ENCODE measurements at regions of chr6 and their contacts with region 1.

Region 1: DNA sequence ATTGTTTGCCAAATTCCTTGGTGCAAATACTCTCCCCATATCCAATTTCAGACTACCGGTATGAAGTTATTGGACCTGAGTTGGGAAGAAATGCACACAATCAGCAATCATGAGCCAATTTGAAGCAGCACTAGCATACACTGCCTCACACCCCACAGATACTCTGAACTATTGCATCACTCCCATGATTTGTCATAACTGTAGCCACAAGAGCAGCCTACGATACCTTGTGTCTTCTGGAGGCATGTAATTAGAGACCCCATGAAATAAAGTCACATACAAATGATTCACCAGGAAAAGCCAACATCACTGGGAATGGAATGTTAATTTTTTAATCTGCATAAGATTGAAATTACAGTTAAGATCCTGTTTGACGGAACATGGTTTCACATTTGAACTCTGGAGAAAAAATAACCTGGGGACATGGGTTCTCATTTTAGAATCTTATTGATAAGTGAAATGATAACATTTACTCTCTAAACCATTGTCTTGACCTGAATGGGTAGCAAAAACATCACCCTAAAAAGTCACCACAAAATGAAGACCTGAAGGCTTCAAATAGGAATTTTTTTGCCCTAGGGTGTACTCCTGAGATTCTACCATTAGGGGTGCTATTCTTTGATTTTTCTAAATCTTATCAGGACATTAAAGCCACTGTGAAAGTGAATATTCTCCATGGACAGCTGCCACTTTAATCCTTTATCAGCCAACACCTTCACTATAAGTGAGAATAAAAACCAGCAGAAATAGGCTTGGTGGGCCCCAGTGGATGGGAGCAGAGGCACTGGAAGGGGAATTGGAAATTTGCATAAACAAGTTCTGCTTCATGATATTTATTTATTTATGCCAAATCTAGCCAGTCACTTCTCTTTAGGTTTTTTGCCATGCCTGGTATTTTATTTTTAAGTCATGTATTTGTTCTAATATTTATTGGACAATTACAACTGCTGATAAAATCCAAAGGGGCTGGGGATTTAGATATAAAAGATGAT is 34.5 kb upstream of the HBS1L start:
- DNase-seq: peak; percentile 52 to 60 (median 58)
- ATAC-seq: peak; percentile 63
- H3K4me3 ChIP-seq: no peak overlapping the region
- H3K27ac ChIP-seq: peak overlapping the region; percentile 19; the same call in 1 of the 3 replicates
- H3K4me1 ChIP-seq: peaks cover 29 to 86% of the 10 kb centered on the region in 2 experiments
- H3K27me3 ChIP-seq: no peaks in the 10 kb centered on the region
- CTCF ChIP-seq: peak in 2 of 3 experiments; percentile 55 to 60; a peak in 5 of 6 replicates
- EP300 ChIP-seq: 0 out of 2 replicates have a peak, but pooled peaks have one; percentile 13
- POLR2A ChIP-seq: no peak
- RAD21 ChIP-seq: no peak; a peak in 1 of 4 replicates

Region 2: DNA sequence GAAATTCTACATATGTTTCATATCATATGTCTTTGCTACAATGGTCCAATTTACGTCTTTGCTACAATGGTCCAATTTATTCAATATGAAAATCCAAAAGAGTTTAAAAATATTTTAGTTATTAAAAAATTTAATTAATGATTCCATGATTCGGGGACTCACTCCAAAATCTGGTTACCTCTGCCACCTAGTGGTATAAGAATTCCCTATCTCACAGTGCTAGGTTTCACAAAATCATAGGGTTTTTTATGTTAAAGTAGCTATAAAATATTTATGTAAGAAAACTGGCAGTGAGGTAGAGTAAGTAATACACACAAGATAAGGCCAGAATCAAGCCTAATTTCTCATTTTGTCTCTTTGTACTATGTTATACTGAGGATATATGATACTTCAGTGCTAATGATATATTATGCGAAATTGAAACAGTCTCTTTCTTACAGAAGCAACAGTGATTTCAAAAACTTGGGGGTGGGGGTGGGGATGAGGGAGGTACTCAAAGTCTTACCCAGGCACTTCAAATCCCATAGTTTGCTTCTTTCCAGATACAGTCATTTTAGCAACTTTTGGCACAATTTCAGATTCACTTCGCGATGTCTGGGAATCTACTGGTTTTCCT is 86.8 kb before region 1 on chr6:
- CTCF ChIA-PET with region 1: no interaction called
- POLR2A ChIA-PET with region 1: no interaction called
- in situ Hi-C with region 1: no loop called
- intact Hi-C with region 1: loop called (anchors 10 kb)
- DNase-seq: peak; percentile 19 to 37 (median 22)
- ATAC-seq: peak; percentile 47
- H3K4me3 ChIP-seq: no peak overlapping the region
- H3K27ac ChIP-seq: no peak overlapping the region
- H3K4me1 ChIP-seq: peaks cover 8 to 18% of the 10 kb centered on the region in 2 experiments; a peak in 3 of 5 replicates
- H3K27me3 ChIP-seq: no peaks in the 10 kb centered on the region
- CTCF ChIP-seq: peak in 2 of 3 experiments; percentile 34 to 66; a peak in 3 of 6 replicates
- EP300 ChIP-seq: no peak
- POLR2A ChIP-seq: no peak
- RAD21 ChIP-seq: peak; percentile 36 to 48

Region 3: DNA sequence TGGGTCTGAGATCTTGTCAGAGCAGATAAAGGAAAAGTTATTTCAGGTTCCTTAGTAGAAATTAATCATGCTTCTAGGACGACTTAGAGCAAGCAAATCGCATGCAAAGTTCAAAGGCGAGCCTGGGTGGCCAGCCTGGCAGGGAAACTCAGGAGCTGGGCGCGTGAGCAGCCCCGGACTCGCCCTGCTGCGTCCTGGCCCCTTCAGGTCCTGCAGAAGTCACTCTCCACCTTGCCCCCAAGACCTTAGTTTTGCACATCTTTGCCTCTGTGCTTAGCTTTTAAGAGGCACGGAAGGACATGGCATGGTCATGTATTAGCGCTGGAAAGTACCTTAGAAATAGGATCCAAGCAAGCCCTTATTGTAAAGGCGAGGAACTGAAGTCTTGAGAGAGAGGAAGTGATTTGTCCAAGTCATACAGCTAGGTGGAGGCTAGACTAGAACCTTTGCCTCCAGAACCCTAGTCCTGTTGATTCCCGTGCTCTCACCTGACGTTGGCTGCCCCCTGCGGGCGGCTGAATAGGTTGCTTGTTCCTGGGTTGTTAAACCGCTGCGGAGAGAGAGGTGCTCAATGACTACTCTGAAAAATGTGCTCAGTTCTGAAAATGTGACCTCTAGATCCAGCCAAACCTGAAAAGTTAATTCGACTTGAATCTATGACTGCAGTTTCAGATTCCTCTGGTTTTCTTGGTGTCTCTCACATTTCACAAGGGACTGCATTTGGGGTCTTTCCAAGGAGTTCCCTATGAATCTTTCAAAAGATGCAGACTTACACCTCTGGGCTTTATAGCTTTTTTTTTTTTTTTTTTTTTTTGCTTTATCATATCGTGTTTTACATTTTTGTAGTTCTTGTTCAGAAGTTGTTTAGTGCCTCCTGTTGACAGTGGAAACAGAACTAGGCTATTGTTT is 94.7 kb after region 1 on chr6:
- CTCF ChIA-PET with region 1: no interaction called
- POLR2A ChIA-PET with region 1: no interaction called
- in situ Hi-C with region 1: no loop called
- intact Hi-C with region 1: loop called (anchors 5 kb)
- DNase-seq: peak; percentile 66 to 96 (median 76)
- ATAC-seq: peak; percentile 81
- H3K4me3 ChIP-seq: peak overlapping the region; percentile 71
- H3K27ac ChIP-seq: peak overlapping the region; percentile 73
- H3K4me1 ChIP-seq: peaks cover 23 to 26% of the 10 kb centered on the region in 2 experiments
- H3K27me3 ChIP-seq: no peaks in the 10 kb centered on the region
- CTCF ChIP-seq: peak; percentile 87 to 92 (median 92)
- EP300 ChIP-seq: peak; percentile 10
- POLR2A ChIP-seq: no peak
- RAD21 ChIP-seq: peak; percentile 85 to 87